ENCODE measurements at regions of chr12 and their contacts with region 1.

Region 1: DNA sequence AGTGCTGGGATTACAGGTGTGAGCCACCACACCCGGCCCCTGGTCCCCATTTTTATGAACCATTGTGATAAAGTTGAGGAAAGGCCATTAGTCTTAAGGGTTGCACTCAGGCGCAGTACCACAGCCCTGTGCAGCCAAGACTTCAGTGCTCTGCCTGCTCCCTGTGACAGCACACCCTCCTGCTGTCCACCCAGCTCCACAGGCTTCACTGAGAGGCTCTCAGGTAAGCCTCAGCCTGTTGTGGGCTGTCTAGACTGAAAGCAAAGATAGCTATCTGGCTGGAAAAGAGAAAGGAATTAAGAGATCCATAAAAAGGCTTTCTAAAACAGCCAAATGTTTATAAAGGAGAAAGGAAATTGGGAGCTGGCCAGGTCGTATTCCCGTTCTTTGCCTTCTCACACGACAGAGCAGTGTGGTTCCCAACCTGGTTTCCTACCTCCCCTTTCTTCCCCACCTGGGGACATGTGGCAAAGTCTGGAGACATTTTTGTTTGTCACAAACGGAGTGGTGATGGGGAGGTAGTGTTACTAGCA is 19.1 kb upstream of the DNM1L start:
- DNase-seq: no peak
- ATAC-seq: no peak
- H3K4me3 ChIP-seq: no peak overlapping the region
- H3K27ac ChIP-seq: no peak overlapping the region
- H3K4me1 ChIP-seq: no peaks in the 10 kb centered on the region
- H3K27me3 ChIP-seq: no peaks in the 10 kb centered on the region
- CTCF ChIP-seq: no peak
- POLR2A ChIP-seq: no peak

Region 2: DNA sequence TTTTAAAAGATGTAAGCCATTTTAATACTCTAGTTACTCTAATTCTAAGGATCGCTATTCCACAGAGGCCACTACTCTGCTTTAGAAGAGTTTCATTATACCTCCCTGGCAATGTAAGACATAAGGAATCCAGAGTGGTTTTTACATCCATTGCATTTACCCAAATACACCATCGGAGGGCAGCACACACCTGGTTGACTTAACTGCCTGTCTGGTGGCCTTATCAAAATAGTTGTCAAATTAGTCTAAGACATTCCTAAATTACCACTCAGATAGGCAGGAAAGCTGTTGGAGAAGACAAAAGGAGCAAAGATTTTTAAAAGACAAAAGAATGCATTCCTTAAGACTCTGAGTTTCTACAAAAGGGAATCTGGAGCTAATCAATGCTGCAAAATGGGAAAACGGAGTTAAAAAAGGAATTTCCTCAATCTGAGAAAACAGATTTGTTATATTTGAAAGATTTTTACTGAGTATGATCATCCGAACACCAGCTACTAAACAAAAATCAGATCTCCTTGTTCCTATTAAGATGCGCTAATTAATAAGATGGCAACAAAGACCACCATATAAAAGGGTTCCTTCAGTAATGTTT is 294.4 kb before region 1 on chr12:
- intact Hi-C with region 1: loop called (anchors 10 kb)
- DNase-seq: peak; percentile 64 to 72 (median 68)
- ATAC-seq: peak; percentile 82
- H3K4me3 ChIP-seq: no peak overlapping the region
- H3K27ac ChIP-seq: no peak overlapping the region
- H3K4me1 ChIP-seq: peaks cover 14% of the 10 kb centered on the region
- H3K27me3 ChIP-seq: no peaks in the 10 kb centered on the region
- CTCF ChIP-seq: peak; percentile 39 to 90 (median 84)
- POLR2A ChIP-seq: no peak

Region 3: GRCh38 chr12:32423559-32423958 is 236.4 kb before region 1 on chr12:
- intact Hi-C with region 1: no loop called
- DNase-seq: no peak
- ATAC-seq: no peak
- H3K4me3 ChIP-seq: no peak overlapping the region
- H3K27ac ChIP-seq: no peak overlapping the region
- H3K4me1 ChIP-seq: peaks cover 17% of the 10 kb centered on the region
- H3K27me3 ChIP-seq: no peaks in the 10 kb centered on the region
- CTCF ChIP-seq: no peak
- POLR2A ChIP-seq: no peak

Region 4: DNA sequence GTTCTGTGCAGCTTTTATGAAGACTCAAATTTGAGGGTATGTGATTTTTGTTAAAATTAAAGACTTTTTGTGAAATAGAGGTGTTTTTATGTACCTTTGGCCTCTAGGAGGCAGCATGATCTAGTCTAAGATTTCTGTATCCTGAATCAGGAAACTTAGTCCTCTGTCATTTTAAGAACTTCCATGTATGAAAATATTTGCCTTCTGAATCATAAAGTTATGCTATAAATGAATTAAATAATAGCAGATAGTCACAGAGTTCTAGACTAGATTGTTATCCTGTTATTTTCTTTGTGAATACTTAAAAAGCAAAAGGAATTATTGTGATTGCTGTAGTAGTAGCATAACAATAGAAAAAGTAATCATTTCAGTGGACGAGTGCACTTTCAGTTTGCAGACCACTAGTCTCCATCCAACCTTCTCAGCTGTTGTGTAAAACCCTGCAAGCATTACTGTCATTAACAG is 204.3 kb before region 1 on chr12:
- intact Hi-C with region 1: loop called (anchors 10 kb)
- DNase-seq: peak in 2 of 4 donors; percentile 16 to 56
- ATAC-seq: peak; percentile 55
- H3K4me3 ChIP-seq: no peak overlapping the region
- H3K27ac ChIP-seq: peak overlapping the region in 3 of 4 donors; percentile 28 to 59 (median 34)
- H3K4me1 ChIP-seq: peaks cover 43% of the 10 kb centered on the region
- H3K27me3 ChIP-seq: no peaks in the 10 kb centered on the region
- CTCF ChIP-seq: peak; percentile 37 to 73 (median 65)
- POLR2A ChIP-seq: no peak

Region 5: DNA sequence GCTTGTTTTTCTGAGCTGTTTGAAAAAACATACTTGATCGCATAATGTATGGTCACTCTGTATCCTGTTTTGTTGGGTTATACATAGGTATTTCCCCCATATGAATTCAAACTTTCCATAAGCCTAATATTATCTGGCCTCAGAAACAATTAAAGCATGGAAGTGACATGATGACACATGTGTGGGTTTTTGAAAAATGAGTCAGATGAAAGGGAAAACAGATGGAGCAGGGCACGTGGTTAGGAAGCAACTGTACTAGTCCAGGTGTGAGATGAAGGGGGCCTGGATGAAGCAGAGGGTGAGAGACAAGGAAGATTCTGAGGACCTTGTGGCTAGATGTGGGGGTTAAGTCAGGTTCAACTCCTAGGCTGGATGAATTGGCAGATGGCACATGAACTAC is 73.6 kb before region 1 on chr12:
- intact Hi-C with region 1: no loop called
- DNase-seq: no peak
- ATAC-seq: no peak
- H3K4me3 ChIP-seq: no peak overlapping the region
- H3K27ac ChIP-seq: no peak overlapping the region
- H3K4me1 ChIP-seq: no peaks in the 10 kb centered on the region
- H3K27me3 ChIP-seq: no peaks in the 10 kb centered on the region
- CTCF ChIP-seq: no peak
- POLR2A ChIP-seq: no peak

Region 6: DNA sequence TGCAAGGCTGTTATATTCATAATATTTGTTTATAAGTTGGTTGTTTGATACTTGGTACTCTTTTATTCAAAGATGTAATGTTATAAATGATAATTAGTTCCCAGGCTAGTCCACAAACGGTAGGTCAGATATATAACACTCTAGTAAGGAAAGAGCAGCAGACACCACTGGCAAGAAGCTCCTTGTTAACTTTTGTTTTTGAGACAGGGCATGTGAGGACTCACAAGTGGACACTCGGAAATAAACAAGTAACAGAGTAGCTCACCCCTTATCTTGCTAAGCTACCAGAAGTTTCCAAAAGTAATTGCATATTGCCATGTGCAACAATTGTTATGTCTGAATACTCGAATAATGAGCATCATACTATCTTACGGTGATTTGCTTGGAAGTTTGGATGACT is 134.3 kb after region 1 on chr12:
- intact Hi-C with region 1: no loop called
- DNase-seq: no peak
- ATAC-seq: no peak
- H3K4me3 ChIP-seq: no peak overlapping the region
- H3K27ac ChIP-seq: no peak overlapping the region
- H3K4me1 ChIP-seq: no peaks in the 10 kb centered on the region
- H3K27me3 ChIP-seq: no peaks in the 10 kb centered on the region
- CTCF ChIP-seq: no peak
- POLR2A ChIP-seq: no peak

Measured in body of pancreas (tissue), 4 donors.